Posterior cingulate gyrus (tissue), 11 donors: ENCODE measurements at regions of chr16 and their contacts with region 1.

Region 1: DNA sequence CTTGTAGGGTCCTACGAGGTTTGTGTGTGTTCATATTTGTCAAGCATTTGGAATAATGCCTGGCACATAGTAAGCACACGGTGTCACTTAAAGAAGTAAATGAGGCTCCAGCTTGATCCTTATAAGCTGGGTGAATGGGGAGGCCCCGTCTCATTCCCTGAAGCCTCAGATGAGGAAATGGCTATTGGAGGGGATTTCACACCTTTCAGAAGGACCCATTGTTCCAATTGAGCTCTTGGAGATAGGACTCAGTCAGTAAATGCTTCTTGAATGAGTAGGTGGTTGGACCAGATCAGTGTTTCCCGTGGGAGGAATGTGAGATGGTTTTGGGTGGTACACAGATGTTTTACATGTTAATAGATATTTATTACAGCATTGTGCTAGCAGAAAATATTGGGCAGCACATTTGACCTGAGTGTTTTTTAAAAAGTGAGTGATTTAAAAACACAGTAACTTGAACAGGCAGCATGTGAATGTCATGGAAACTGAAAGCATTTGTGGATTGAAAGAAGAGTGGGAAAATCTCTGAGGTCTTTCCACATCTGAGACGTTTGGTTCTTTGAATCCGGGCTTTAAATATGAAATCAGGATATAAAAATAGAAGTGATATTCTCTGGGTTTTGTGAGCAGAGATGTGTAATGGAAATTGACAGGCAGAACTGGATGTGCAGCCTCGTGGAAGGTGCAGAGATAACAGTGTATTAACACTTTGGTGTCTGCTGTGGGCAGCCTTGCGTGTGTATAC is 36.4 kb upstream of the ARHGAP17 start:
- DNase-seq: no peak

Region 2: DNA sequence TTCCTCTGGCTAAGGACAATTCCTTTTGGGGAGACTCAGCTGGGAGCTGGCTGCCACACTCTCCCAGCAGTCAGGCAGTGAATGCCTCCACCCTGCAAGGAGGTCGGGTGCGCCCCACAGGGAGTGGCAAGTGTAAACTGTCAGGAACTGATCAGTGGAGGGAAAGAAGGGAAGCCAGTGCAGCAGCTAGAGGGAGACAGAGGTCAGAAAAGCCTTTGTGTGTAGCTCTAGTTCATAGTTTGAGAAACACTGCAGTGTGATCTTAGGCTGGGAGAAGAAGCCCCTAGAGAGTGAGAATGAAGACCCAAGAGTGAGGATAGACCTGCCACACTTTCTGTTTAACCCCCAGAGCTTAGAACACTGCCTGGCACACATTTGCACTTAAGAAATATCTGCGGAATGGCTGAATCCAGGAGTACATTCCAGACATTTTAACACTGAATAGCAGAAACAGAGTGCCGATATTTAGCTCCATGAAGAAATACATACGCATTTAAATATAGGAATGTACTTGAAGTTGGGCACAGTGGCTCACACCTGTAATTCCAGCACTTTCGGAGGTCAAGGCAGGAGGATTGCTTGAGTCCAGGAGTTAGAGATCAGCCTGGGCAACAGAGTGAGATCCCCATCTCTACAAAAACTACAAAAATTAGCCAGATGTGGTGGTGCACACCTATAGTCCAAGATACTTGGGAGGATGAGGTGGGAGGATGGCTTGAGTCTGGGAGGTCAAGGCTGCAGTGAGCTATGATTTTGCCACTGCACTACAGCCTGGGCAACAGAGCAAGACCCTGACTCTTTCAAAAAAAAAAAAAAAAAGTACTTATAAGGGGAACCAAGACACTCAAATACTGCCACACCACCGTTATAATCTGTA is 216.9 kb before region 1 on chr16:
- intact Hi-C with region 1: no loop called
- DNase-seq: peak in 5 of 10 donors; percentile 53 to 87 (median 57)

Region 3: DNA sequence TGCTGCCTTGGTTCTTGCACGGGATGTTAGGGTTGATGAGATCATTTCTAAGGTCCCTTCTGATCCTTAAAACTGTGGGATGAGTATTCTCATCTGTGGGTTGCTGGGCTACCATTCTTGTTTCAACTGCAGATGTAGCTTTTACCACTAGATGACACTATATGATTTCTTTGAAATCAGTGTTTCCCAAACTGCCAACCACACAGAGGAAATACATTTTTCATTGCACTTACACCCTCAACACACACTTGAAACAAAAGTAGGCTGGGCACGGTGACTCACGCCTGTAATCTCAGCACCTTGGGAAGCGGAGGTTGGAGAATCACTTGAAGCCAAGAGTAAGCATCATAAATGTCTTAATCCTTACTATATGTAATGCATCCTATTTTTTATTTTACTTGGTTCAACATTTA is 75.2 kb after region 1 on chr16:
- intact Hi-C with region 1: loop called (anchors 1 kb)
- DNase-seq: peak in 6 of 10 donors; percentile 22 to 92 (median 42)

Region 4: DNA sequence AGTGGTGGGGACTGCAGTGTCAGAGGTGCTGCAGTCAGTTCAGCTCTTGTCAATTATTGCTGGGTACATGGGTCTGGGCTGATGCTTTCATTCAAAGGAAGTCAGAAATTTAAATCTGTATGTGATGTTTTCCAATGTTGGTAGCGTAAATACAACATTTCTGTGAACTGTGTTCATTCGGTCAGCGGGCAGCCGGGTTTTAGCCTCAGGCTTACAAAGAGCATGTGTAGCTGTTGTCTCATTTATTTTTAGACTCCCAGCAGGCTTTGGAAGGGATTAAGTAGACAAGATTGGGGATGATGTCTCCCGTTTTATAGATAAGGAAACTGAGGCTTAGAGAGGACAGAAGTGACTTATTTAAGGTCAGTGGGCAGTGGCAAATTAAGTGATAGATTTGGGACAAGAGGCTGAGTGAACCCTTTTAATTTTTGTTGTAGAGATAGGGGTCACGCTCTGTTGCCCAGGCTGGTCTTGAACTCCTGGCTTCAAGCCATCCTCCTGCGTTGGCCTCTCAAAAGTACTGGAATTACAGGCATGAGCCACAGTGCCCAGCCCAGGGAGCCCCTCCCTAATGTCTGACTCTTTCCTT is 173.2 kb after region 1 on chr16:
- intact Hi-C with region 1: loop called (anchors 10 kb)
- DNase-seq: no peak